CD8-positive, alpha-beta T cell (primary cell): ENCODE measurements at regions of chr18 and their contacts with region 1.

Region 1: DNA sequence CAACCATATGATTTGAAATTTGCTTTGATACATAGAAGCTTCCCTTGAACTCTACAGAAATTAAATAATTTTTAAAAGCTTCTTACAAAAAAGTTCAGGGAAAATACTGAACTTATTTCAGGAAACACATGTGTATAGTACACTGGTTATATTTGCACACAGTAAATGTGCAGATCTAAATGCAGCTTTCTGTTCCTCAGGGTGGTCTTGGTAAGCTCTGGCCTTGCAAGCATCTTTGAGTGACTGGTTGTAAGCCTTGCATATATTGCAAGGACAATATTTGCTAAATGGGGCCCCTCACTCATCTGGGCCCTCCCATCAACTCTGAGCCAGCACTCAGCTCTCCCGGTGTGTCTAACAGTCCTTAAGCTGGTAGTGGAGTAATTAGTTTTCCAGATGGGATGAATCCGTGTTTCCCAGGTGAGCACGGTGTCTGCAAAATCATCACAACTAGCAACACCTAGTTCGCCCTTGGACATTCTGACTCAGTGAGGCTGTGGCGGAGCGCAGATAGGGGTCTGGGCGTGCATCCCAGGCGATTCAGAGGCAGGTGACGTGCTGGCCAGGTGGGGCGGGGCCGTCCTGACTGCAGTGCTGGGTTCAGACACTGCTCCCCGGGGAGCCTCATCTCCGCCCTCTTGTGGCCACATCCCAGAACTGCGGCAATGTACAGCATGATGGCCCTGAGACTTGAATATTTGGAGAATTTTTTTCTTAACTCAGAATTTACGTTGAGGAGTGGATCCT is 149.6 kb downstream of the MBP start:
- DNase-seq: peak; percentile 72 to 89 (median 84)
- ATAC-seq: peak; percentile 100
- H3K4me3 ChIP-seq: no peak overlapping the region
- H3K4me3 Mint-ChIP-seq: no peak overlapping the region
- H3K27ac ChIP-seq: no peak overlapping the region
- H3K27ac Mint-ChIP-seq: no peak overlapping the region
- H3K4me1 ChIP-seq: peaks cover 3% of the 10 kb centered on the region
- H3K4me1 Mint-ChIP-seq: peaks cover 7% of the 10 kb centered on the region
- H3K27me3 ChIP-seq: no peaks in the 10 kb centered on the region
- H3K27me3 Mint-ChIP-seq: no peaks in the 10 kb centered on the region
- CTCF ChIP-seq: peak; percentile 93

Region 2: GRCh38 chr18:76903386-76903785 is 79.6 kb before region 1 on chr18:
- CTCF ChIA-PET with region 1: no interaction called
- POLR2A ChIA-PET with region 1: no interaction called
- intact Hi-C with region 1: no loop called
- DNase-seq: no peak
- ATAC-seq: no peak
- H3K4me3 ChIP-seq: no peak overlapping the region
- H3K4me3 Mint-ChIP-seq: no peak overlapping the region
- H3K27ac ChIP-seq: no peak overlapping the region
- H3K27ac Mint-ChIP-seq: no peak overlapping the region
- H3K4me1 ChIP-seq: no peaks in the 10 kb centered on the region
- H3K4me1 Mint-ChIP-seq: no peaks in the 10 kb centered on the region
- H3K27me3 ChIP-seq: no peaks in the 10 kb centered on the region
- H3K27me3 Mint-ChIP-seq: no peaks in the 10 kb centered on the region
- CTCF ChIP-seq: no peak

Region 3: GRCh38 chr18:77013811-77014521 is 31.0 kb after region 1 on chr18:
- CTCF ChIA-PET with region 1: interaction called, 12 read pairs
- POLR2A ChIA-PET with region 1: no interaction called
- intact Hi-C with region 1: no loop called
- DNase-seq: no peak
- ATAC-seq: no peak
- H3K4me3 ChIP-seq: no peak overlapping the region
- H3K4me3 Mint-ChIP-seq: no peak overlapping the region
- H3K27ac ChIP-seq: no peak overlapping the region
- H3K27ac Mint-ChIP-seq: peak overlapping the region; percentile 33
- H3K4me1 ChIP-seq: no peaks in the 10 kb centered on the region
- H3K4me1 Mint-ChIP-seq: peaks cover 37% of the 10 kb centered on the region
- H3K27me3 ChIP-seq: no peaks in the 10 kb centered on the region
- H3K27me3 Mint-ChIP-seq: no peaks in the 10 kb centered on the region
- CTCF ChIP-seq: no peak

Region 4: DNA sequence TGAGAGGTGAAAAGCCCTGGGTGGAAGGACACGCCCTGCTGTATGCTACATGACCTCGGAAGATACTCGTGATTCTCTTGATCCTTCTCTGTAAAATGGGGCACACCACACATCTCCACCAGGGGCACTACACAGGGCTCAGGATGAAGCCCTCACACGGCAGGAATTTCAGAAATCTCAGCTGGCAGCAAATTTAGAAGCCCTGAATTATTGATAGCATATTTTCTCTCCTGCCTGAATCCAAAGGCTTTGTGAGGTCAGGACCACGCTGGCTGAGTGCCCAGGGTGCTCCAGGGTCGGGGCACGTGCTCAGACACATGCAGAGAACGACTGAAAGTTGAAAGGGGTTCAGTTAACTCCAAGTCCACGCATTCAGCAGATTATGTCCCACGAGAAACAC is 224.5 kb after region 1 on chr18:
- CTCF ChIA-PET with region 1: interaction called, 35 read pairs
- POLR2A ChIA-PET with region 1: no interaction called
- intact Hi-C with region 1: no loop called
- DNase-seq: peak; percentile 29 to 80 (median 58)
- ATAC-seq: peak; percentile 93
- H3K4me3 ChIP-seq: no peak overlapping the region
- H3K4me3 Mint-ChIP-seq: peak overlapping the region; percentile 62
- H3K27ac ChIP-seq: no peak overlapping the region
- H3K27ac Mint-ChIP-seq: peak overlapping the region; percentile 34
- H3K4me1 ChIP-seq: peaks cover 40% of the 10 kb centered on the region
- H3K4me1 Mint-ChIP-seq: peaks cover 46% of the 10 kb centered on the region
- H3K27me3 ChIP-seq: no peaks in the 10 kb centered on the region
- H3K27me3 Mint-ChIP-seq: peaks cover 2% of the 10 kb centered on the region
- CTCF ChIP-seq: peak; percentile 57